GM10248 (cell line): ENCODE measurements at regions of chr11 and their contacts with region 1.

Region 1: DNA sequence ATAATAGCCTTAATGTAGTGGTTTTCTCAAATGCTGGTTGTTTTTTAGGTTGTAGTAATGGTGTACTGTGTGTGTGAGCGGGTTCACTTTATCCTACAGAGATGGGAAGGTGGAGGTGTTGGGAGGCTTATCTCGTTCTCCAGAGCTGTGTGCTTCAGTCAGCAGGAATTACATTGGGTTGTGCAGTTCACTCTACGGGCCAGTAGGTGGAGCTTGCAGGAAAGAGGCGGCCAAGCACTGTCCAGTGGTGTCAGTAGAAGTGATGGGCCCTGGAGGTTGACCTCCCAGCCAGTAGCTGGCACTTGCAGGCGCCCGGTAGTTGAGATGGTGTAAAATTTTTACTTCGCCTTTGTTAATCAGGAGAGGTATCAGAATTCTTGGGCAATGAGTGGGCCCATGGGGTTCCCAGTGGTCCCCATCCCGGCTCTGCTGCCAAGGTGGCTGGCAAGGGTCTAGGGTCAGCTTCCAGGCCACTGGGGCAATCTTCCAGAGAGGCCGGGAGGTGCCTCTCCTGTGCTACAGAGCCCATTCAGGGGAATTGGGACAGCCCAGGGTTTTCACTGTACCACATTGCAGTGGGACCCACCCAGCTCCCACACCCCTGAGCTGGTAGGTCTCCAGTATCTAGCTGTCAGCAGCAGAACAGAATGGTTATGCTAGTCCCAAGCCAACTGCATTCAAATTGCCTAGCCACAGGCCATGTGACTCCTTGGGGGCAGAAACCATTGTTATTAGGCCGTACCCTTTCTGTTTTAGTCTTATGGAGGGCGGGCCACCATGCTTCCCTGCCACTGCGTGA is 43.9 kb downstream of the BIRC2 start:
- DNase-seq: peak; percentile 63
- CTCF ChIP-seq: peak; percentile 92

Region 2: DNA sequence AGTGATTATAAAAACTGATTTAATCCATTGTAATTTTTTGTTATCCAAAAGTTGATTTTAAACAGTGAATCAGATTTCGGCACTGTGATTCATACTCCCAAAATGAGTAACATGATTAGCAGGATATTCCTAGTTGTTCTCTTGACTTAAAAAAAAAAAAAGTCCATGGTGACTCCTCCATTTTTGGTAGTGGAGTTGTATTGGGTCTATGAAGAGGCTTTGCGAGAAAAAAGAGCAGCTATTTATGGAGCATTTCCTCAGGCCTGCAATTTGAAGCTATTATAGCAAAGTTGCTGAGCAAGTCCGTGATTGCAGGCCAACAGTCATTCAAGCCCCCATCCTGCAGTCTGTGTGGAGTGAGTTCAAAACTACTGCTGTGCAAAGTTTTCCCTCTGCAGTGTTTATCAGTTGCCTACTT is 251.8 kb before region 1 on chr11:
- CTCF ChIA-PET with region 1: no interaction called
- POLR2A ChIA-PET with region 1: no interaction called
- DNase-seq: no peak
- CTCF ChIP-seq: no peak

Region 3: DNA sequence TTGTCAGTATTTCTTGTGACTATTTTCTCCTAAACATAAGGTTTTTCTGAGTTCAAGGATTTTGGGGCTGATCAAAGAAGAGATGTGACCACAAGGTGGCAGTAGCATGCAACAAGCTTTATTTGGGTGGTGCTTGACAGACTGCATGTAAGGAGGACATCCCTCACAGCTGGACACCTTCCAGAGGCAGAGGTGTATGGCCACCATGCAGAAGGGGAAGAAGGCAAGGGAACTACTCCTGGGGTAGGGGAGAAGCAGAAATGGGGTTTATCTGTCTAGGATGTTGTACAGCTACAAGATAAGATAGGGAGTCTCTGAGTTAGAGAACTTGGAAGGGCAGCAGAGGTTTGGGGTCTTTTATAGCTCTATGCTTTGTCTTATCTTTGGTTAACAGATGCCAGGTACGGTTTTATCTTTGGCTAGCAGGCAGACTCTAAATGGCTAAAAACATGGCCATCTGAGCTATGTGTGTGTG is 49.0 kb before region 1 on chr11:
- CTCF ChIA-PET with region 1: interaction called, 17 read pairs
- POLR2A ChIA-PET with region 1: no interaction called
- DNase-seq: peak; percentile 54
- CTCF ChIP-seq: peak; percentile 73

Region 4: GRCh38 chr11:102375720-102376399 is 15.0 kb before region 1 on chr11:
- CTCF ChIA-PET with region 1: interaction called, 69 read pairs
- POLR2A ChIA-PET with region 1: no interaction called
- DNase-seq: no peak
- CTCF ChIP-seq: no peak

Region 5: DNA sequence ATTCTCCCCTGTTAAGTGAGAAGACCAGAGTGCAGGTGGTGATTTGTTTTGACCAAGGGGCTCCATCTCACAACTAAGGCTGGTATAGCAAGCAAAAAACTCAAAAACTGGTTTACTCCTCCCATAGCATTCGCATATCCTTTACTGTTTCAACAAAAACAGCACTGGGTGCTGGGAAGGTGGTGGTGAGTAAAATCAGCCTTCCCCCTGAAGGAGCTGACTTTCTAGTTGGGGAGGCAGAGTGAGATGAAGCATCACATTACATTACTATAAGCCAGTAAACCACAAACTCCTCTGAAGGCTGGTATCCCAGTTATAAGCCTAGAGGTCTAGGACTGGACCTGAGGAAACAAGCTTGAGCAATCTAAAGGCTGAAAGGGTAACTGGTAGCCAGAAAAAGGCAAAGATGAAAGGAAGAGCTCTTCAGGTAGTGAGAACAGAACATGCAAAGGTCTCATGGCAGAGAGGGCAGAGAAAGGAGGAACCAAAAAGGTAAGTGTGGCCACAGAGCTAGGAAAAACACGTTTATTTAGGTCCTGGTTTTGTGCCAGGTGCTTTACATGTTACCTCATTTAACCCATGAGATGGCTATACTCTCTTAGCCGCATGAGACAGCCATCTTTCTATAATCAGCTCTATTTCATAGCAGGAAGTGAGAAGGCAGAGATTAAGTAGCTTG is 39.4 kb after region 1 on chr11:
- CTCF ChIA-PET with region 1: interaction called, 13 read pairs
- POLR2A ChIA-PET with region 1: no interaction called
- DNase-seq: peak; percentile 60
- CTCF ChIP-seq: no peak

Region 6: DNA sequence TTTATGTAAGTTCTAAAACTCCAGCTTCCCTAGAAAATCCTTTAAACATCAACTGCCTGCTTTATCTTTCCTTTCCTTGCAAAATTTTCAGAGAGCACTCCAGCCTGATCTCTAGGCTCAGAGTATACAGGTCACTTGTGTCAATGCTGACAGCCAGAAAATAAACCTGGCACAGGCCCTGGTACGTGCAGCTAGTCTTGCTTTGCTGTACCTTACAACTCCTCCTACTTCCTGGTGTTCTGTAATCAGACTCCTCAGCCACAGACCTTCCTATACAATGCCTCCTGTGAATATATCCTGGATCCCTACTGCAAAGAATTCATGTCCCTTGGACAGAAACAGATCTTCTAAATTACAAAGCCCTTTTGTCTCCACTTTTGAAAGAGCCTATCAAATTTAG is 85.9 kb after region 1 on chr11:
- CTCF ChIA-PET with region 1: interaction called, 12 read pairs
- POLR2A ChIA-PET with region 1: no interaction called
- DNase-seq: no peak
- CTCF ChIP-seq: no peak

Region 7: DNA sequence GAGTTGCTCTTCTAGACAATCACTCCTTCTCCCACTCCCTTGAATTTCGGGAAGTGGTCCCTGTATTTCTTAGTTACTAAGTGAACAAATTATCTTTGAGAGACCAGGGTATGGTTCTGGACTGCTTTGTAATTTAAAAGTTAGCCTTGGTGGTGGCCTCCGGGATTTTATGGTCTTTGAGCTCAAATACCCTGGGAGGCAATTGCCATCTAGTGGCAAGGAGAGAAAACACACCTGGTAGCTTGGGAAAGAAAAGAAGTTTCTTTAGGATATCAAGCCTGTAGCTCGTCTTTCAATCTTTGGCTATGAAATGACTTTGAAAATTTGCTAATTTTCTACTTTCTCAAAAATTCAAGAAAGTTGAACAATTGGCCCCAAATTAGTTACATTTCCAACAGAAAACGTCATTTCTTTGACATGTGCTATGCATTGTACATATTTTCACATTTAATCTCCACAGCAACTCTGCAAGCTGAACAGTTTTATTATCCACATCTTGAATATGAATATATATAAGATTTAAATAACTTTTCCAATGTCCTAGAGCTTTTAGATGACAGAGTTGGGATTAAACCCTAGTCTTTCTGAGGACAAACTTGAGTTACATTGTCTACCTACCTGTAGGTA is 275.6 kb after region 1 on chr11:
- CTCF ChIA-PET with region 1: interaction called, 24 read pairs
- POLR2A ChIA-PET with region 1: no interaction called
- DNase-seq: peak; percentile 50
- CTCF ChIP-seq: peak; percentile 85